ENCODE measurements at regions of chr1 and their contacts with region 1.

Region 1: GRCh38 chr1:92065044-92065443 is 10.2 kb downstream of the SETSIP start:
- DNase-seq: no peak
- H3K4me3 ChIP-seq: no peak overlapping the region
- H3K4me3 Mint-ChIP-seq: no peak overlapping the region
- H3K27ac Mint-ChIP-seq: no peak overlapping the region
- H3K4me1 ChIP-seq: no peaks in the 10 kb centered on the region
- H3K4me1 Mint-ChIP-seq: no peaks in the 10 kb centered on the region
- H3K27me3 ChIP-seq: no peaks in the 10 kb centered on the region
- H3K27me3 Mint-ChIP-seq: no peaks in the 10 kb centered on the region
- CTCF ChIP-seq: peak in 1 of 2 experiments; percentile 27

Region 2: GRCh38 chr1:91997607-91998195 is 67.3 kb before region 1 on chr1:
- CTCF ChIA-PET with region 1: no interaction called
- POLR2A ChIA-PET with region 1: no interaction called
- intact Hi-C with region 1: loop called (anchors 1 kb)
- DNase-seq: peak in 1 of 2 experiments; percentile 16
- H3K4me3 ChIP-seq: no peak overlapping the region
- H3K4me3 Mint-ChIP-seq: no peak overlapping the region
- H3K27ac Mint-ChIP-seq: no peak overlapping the region
- H3K4me1 ChIP-seq: no peaks in the 10 kb centered on the region
- H3K4me1 Mint-ChIP-seq: no peaks in the 10 kb centered on the region
- H3K27me3 ChIP-seq: no peaks in the 10 kb centered on the region
- H3K27me3 Mint-ChIP-seq: no peaks in the 10 kb centered on the region
- CTCF ChIP-seq: peak; percentile 32 to 38

Region 3: DNA sequence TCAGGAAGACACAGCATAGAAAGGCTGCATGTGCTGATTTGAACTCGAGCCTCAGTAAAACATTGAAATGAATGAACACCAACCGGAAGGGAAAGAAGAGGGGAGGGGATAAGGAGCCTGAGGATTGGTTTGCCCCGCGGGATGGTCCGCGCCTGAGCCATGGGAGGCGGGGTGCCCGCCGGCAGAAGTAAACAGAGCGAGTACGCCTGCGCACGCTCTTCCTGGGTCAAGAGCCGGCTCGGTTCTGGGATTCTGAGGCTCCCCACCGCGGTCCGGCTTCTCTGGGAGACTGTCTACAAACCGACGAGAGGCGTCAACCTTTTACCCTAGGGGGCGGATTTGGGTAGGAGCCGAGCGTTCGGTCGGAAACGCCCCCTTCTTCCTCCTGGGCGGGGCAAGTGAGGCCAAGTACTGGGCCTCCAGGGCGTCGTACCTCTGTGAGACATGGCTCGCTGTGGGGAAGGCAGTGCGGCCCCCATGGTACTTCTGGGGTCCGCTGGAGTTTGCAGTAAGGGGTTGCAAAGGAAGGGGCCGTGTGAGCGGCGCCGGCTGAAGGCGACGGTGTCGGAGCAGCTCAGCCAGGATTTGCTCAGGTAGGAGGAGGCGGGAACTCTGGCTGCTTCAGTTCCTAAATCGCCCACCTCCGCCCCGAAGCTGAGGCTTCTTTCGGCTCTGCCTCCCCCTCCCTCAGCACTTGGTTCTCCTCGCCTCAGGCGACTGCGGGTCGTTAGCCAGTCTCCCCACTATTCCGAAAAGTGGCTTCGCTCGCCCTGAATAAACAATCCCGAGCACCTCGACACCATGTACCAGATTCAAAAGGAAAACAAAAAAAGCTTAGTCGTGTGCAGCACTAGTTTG is 15.3 kb after region 1 on chr1 and contains the start of gene BTBD8:
- CTCF ChIA-PET with region 1: no interaction called
- POLR2A ChIA-PET with region 1: no interaction called
- intact Hi-C with region 1: loop called (anchors 1 kb)
- DNase-seq: peak; percentile 83 to 85
- H3K4me3 ChIP-seq: peak within 1 kb of the TSS; percentile 50
- H3K4me3 Mint-ChIP-seq: peak within 1 kb of the TSS; percentile 81
- H3K27ac Mint-ChIP-seq: peak within 1 kb of the TSS; percentile 90
- H3K4me1 ChIP-seq: no peaks in the 10 kb centered on the region
- H3K4me1 Mint-ChIP-seq: no peaks in the 10 kb centered on the region
- H3K27me3 ChIP-seq: no peaks in the 10 kb centered on the region
- H3K27me3 Mint-ChIP-seq: no peaks in the 10 kb centered on the region
- CTCF ChIP-seq: no peak
- total RNA-seq, gene BTBD8: 1.1 and 1.3 TPM in 2 replicates